Astrocyte of the cerebellum (primary cell): ENCODE measurements at regions of chr5 and their contacts with region 1.

Region 1: DNA sequence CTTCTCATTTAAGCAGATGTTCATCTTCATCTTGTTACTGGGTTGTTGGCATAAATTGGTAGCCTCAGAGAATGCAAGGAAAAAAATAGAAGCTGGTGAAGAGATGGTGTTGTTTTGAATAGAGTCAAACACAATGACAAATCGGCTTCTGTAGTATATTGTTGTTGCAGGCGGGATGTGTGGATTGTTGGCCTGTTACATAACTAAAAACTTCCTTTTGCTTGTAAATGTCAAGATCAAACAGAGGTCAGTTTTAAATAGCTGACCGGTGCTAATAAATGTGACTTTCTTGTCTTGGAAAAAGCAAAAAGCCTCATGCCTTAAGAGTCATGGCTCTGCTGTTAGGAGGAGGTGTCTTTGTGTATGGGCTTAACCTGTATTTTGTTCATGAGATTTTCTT is 59.2 kb downstream of the CCDC192 start:
- DNase-seq: no peak
- H3K4me3 ChIP-seq: no peak overlapping the region
- CTCF ChIP-seq: no peak

Region 2: DNA sequence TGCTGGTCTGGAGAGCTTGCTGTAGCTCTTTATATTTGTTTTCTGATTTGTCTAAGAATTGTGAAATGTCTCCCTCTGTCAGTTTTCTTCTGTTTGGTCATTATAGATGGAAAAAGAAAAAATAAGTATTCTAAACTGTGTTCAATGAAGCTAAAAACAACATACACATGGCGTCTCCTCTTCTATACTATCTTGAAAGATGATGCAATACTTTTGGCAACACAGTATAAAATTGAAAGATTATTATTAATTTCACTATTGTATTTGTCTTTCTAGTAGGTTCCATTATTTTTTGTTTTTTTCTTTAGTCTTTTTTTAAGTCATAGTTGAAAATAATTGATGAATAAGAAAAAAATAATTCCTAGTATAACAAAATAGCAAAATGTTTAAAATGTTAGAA is 36.7 kb before region 1 on chr5:
- in situ Hi-C with region 1: loop called (anchors 5 kb)
- DNase-seq: no peak
- H3K4me3 ChIP-seq: no peak overlapping the region
- CTCF ChIP-seq: no peak